Endothelial cell of umbilical vein (primary cell): ENCODE measurements at regions of chr14 and their contacts with region 1.

Region 1: DNA sequence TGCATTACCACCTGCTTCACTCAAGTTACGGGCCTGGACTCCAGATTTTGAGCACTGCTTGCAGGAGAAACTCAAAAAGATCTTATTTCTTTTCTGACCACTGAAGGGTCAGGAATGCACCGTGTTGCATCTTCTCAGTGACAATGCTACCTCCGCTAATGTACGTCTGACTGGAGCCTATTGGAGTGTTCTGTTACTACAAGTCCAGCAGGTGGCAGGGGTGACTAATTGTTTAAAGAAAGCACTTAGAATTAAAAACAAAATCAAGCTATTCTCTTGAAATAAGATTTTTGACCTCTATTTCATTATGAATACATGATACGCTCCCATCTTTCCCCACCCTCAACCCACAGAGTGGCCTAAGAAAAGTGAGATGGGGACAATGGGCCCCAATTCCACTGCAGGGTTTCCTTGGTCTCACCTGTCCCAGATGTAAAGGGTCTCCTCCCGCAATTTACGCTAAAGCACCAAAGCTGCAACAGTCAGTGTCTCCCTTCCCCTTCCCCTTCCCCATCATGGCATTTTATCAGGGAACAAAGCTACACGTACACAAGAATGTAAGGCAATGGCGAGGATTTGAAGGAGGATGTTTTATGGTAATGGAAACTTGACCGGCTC is 2.2 kb downstream of the TBPL2 start:
- DNase-seq: peak; percentile 58
- H3K4me3 ChIP-seq: no peak overlapping the region
- H3K27ac ChIP-seq: no peak overlapping the region
- H3K4me1 ChIP-seq: no peaks in the 10 kb centered on the region
- H3K27me3 ChIP-seq: peaks cover 2 to 5% of the 10 kb centered on the region in 2 experiments
- CTCF ChIP-seq: peak; percentile 53 to 56
- POLR2A ChIP-seq: no peak

Region 2: GRCh38 chr14:55454264-55455002 is 16.3 kb after region 1 on chr14:
- CTCF ChIA-PET with region 1: interaction called, 10 read pairs
- POLR2A ChIA-PET with region 1: no interaction called
- dilution Hi-C with region 1: no loop called
- intact Hi-C with region 1: no loop called
- DNase-seq: peak; percentile 81
- H3K4me3 ChIP-seq: no peak overlapping the region
- H3K27ac ChIP-seq: no peak overlapping the region
- H3K4me1 ChIP-seq: peaks cover 52% of the 10 kb centered on the region
- H3K27me3 ChIP-seq: no peaks in the 10 kb centered on the region
- CTCF ChIP-seq: no peak
- POLR2A ChIP-seq: no peak

Region 3: GRCh38 chr14:55624913-55625312 is 186.7 kb after region 1 on chr14:
- CTCF ChIA-PET with region 1: interaction called, 11 read pairs
- POLR2A ChIA-PET with region 1: no interaction called
- dilution Hi-C with region 1: no loop called
- intact Hi-C with region 1: loop called (anchors 10 kb)
- DNase-seq: no peak
- H3K4me3 ChIP-seq: no peak overlapping the region
- H3K27ac ChIP-seq: no peak overlapping the region
- H3K4me1 ChIP-seq: no peaks in the 10 kb centered on the region
- H3K27me3 ChIP-seq: no peaks in the 10 kb centered on the region
- CTCF ChIP-seq: no peak
- POLR2A ChIP-seq: no peak

Region 4: GRCh38 chr14:55665067-55665675 is 227.0 kb after region 1 on chr14:
- CTCF ChIA-PET with region 1: interaction called, 21 read pairs
- POLR2A ChIA-PET with region 1: interaction called, 4 read pairs
- dilution Hi-C with region 1: no loop called
- intact Hi-C with region 1: no loop called
- DNase-seq: no peak
- H3K4me3 ChIP-seq: no peak overlapping the region
- H3K27ac ChIP-seq: no peak overlapping the region
- H3K4me1 ChIP-seq: no peaks in the 10 kb centered on the region
- H3K27me3 ChIP-seq: no peaks in the 10 kb centered on the region
- CTCF ChIP-seq: no peak
- POLR2A ChIP-seq: no peak

Region 5: DNA sequence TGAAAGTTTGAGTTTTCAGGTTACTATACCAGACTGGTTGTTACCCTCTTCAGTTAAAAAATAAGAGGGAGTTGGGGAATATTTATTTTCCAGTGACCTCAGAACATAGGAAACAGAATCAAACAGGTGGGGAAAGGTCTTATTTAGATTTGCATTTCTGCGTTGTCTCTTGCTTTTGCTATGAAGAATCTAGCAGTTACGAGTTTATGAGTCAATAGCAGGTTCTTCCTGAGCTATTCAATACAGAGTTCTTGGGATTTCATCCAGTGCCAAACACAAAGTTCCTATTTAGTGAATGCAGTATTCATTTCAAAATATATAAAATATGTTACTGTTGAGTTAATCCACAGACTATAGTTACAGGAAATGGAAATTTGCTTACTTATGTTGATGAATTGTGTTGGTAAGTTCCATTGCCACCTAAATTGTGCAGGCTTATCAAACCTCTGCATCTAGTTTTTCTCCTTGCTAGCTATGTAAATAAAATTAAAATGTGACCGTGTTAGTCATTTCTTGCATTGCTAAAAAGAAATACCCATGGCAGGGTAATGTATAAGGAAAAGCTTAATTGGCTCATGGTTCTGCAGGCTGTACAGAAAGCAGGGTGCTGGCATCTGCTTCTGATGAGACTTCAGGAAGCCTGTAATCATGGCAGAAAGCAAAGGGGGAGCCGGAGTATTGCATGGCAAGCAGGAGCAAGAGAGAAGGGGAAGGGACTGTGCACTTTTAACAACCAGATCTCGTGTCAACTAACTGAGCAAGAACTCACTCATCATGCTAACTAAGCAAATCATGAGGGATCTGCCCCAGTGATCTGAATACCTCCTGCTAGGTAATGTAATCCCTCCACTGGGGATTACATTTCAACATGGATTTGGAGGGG is 252.0 kb after region 1 on chr14:
- CTCF ChIA-PET with region 1: interaction called, 20 read pairs
- POLR2A ChIA-PET with region 1: no interaction called
- dilution Hi-C with region 1: no loop called
- intact Hi-C with region 1: no loop called
- DNase-seq: peak; percentile 73
- H3K4me3 ChIP-seq: peak overlapping the region in 2 of 3 experiments; percentile 11 to 47
- H3K27ac ChIP-seq: peak overlapping the region; percentile 80
- H3K4me1 ChIP-seq: peaks cover 20% of the 10 kb centered on the region
- H3K27me3 ChIP-seq: no peaks in the 10 kb centered on the region
- CTCF ChIP-seq: no peak
- POLR2A ChIP-seq: no peak

Region 6: GRCh38 chr14:56339855-56340701 is 901.9 kb after region 1 on chr14:
- CTCF ChIA-PET with region 1: interaction called, 23 read pairs
- POLR2A ChIA-PET with region 1: no interaction called
- dilution Hi-C with region 1: no loop called
- intact Hi-C with region 1: no loop called
- DNase-seq: peak; percentile 89
- H3K4me3 ChIP-seq: no peak overlapping the region
- H3K27ac ChIP-seq: peak overlapping the region; percentile 55
- H3K4me1 ChIP-seq: peaks cover 43% of the 10 kb centered on the region
- H3K27me3 ChIP-seq: no peaks in the 10 kb centered on the region
- CTCF ChIP-seq: peak; percentile 86 to 94
- POLR2A ChIP-seq: no peak

Region 7: GRCh38 chr14:56482310-56482911 is 1044.2 kb after region 1 on chr14:
- CTCF ChIA-PET with region 1: interaction called, 196 read pairs
- POLR2A ChIA-PET with region 1: no interaction called
- dilution Hi-C with region 1: no loop called
- intact Hi-C with region 1: loop called (anchors 2 kb)
- DNase-seq: peak; percentile 16
- H3K4me3 ChIP-seq: no peak overlapping the region
- H3K27ac ChIP-seq: no peak overlapping the region
- H3K4me1 ChIP-seq: no peaks in the 10 kb centered on the region
- H3K27me3 ChIP-seq: peaks cover 1 to 2% of the 10 kb centered on the region in 2 experiments
- CTCF ChIP-seq: peak; percentile 16 to 26
- POLR2A ChIP-seq: no peak